WTC11 (cell line): ENCODE measurements at regions of chr20 and their contacts with region 1.

Region 1: DNA sequence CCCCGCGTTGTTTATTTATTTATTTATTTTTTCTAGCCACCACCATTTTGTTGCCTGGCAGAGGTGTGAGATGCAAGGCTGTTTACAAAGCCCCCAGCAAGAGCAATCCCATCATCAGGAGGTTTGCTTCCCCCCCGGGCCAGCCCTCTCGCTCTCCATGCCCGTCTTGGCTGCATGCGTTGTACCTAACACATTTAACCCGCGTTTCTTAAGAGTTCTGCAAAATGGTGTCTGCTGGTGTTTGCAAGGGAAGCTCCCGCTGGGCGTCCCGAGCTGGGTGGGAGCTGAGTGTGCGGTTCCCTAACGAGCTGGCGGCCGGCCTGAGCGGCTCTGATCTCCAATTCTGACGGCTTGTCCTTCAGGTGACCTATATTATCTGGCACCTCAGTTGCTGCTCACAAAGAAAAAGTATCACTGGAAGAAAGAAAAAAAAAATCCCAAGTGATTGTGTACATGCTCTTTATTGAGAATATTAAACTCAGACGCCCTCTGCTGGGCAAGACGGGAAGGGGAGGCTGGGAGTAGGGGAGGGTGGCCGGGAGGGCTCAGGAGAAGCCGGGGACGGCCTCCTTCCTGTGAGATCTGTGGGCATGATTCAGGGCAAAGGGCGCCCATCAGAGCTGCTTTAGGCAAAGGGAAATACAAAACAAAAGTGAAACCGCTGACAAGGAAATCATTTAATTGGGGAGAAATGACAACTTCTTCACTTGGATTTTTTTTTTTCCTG is 154.8 kb downstream of the BCAS1 start:
- DNase-seq: peak; percentile 93
- ATAC-seq: peak; percentile 75
- H3K4me3 Mint-ChIP-seq: peak overlapping the region; percentile 86
- H3K27ac Mint-ChIP-seq: peak overlapping the region; percentile 90
- H3K4me1 Mint-ChIP-seq: peaks cover 46% of the 10 kb centered on the region
- H3K27me3 Mint-ChIP-seq: no peaks in the 10 kb centered on the region; the same call in 1 of the 2 replicates
- CTCF ChIP-seq: peak; percentile 76

Region 2: DNA sequence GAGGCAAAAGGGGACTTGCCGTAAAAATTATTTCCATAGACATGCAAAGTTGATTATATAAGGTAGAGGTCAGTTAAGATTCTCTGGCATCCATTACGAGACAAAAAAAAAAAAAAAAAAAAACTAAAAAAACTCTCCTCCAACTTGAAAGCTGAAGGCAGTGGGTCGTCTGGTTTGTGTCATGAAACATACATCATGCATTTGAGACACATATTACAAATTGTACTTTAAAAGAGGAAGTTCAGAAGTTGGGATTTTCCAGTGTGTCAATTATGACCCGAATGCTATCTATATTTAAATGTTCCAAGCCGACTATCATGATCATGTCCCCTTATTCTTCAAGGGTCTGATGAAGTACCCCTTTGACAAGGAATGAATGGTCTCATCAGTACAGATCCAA is 447.0 kb before region 1 on chr20:
- CTCF ChIA-PET with region 1: no interaction called
- POLR2A ChIA-PET with region 1: no interaction called
- DNase-seq: no peak
- ATAC-seq: no peak
- H3K4me3 Mint-ChIP-seq: no peak overlapping the region
- H3K27ac Mint-ChIP-seq: no peak overlapping the region
- H3K4me1 Mint-ChIP-seq: peaks cover 7% of the 10 kb centered on the region
- H3K27me3 Mint-ChIP-seq: no peaks in the 10 kb centered on the region; the same call in 1 of the 2 replicates
- CTCF ChIP-seq: no peak

Region 3: DNA sequence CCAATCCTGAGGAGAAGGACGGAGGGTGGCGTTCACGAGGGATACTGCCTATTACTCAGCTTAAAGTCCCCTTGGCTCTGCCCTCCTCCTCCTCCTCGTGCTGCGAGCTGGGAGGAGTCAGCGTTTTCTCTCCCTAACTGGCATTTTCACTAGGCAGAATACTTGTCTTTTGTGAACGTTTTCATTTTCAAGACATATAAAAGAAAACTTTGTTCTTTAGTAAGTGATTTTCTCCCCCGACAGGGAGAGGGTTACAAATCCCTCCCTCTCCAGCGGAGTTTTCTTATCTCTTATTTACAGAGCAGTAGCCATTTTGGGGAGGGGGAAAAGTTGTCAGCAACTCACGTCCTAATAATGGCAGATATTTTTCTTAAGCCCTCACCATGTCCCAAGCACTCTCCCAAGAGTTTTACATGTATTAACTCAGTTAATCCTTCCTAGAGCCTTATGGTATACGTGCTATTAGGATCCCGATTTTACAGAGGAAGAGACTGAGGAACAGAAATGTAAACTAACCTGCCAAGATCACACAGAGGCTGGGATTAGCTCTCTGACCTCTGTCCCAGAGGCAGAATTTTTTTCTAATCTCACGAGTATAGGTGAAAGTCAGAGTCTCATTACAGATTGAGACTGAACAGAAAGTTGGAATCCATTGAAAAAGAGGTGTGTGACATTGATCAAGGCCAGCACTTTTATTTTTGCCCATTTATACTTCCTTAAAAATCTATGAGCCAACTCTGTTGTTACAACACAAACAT is 292.0 kb before region 1 on chr20:
- CTCF ChIA-PET with region 1: interaction called, 12 read pairs
- POLR2A ChIA-PET with region 1: interaction called, 4 read pairs
- DNase-seq: peak; percentile 42
- ATAC-seq: peak; percentile 86
- H3K4me3 Mint-ChIP-seq: peak overlapping the region; percentile 60
- H3K27ac Mint-ChIP-seq: peak overlapping the region; percentile 90
- H3K4me1 Mint-ChIP-seq: peaks cover 37% of the 10 kb centered on the region
- H3K27me3 Mint-ChIP-seq: no peaks in the 10 kb centered on the region
- CTCF ChIP-seq: no peak

Region 4: GRCh38 chr20:53872561-53873229 is 42.9 kb before region 1 on chr20:
- CTCF ChIA-PET with region 1: interaction called, 23 read pairs
- POLR2A ChIA-PET with region 1: interaction called, 3 read pairs
- DNase-seq: no peak
- ATAC-seq: no peak
- H3K4me3 Mint-ChIP-seq: peak overlapping the region; percentile 25; the same call in 1 of the 2 replicates
- H3K27ac Mint-ChIP-seq: peak overlapping the region; percentile 93
- H3K4me1 Mint-ChIP-seq: peaks cover 72% of the 10 kb centered on the region
- H3K27me3 Mint-ChIP-seq: no peaks in the 10 kb centered on the region; the same call in 1 of the 2 replicates
- CTCF ChIP-seq: no peak

Region 5: DNA sequence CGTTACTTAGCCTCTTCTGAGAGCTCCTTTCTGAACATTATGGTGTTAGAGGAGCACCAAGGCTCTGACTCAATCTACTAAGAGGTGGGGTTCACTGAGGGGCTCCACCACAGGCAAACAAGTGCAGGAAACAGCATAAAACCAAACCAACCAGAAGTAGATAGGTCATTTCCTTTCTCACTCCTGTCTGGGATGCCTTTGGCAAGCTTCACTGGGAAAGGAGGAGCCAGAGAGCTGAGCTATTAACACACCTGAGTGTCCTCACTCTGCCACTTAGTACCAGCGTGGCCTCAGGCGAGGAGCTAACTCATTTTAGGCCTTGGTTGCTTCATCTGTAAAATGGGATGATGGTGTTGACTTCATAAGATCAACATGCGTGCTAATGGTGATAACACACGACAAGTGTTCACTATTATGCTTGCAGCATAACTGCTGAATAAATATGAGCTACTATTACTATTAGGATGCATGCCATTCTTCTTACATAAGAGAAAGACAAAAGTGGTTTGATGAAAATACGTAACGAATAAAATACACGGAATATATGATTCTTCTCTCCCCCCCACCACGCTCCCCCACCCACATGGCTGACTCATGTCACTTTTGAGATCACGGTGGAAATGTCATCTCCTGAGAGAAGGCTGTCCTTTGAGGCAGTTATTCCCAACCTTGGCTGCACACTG is 30.6 kb before region 1 on chr20:
- CTCF ChIA-PET with region 1: interaction called, 21 read pairs
- POLR2A ChIA-PET with region 1: no interaction called
- DNase-seq: no peak
- ATAC-seq: peak; percentile 33
- H3K4me3 Mint-ChIP-seq: no peak overlapping the region
- H3K27ac Mint-ChIP-seq: peak overlapping the region; percentile 43
- H3K4me1 Mint-ChIP-seq: peaks cover 54% of the 10 kb centered on the region
- H3K27me3 Mint-ChIP-seq: no peaks in the 10 kb centered on the region
- CTCF ChIP-seq: no peak

Region 6: GRCh38 chr20:53899351-53900167 is 16.1 kb before region 1 on chr20:
- CTCF ChIA-PET with region 1: interaction called, 68 read pairs
- POLR2A ChIA-PET with region 1: interaction called, 3 read pairs
- DNase-seq: no peak
- ATAC-seq: peak; percentile 59
- H3K4me3 Mint-ChIP-seq: no peak overlapping the region
- H3K27ac Mint-ChIP-seq: no peak overlapping the region
- H3K4me1 Mint-ChIP-seq: peaks cover 43% of the 10 kb centered on the region
- H3K27me3 Mint-ChIP-seq: no peaks in the 10 kb centered on the region
- CTCF ChIP-seq: no peak

Region 7: DNA sequence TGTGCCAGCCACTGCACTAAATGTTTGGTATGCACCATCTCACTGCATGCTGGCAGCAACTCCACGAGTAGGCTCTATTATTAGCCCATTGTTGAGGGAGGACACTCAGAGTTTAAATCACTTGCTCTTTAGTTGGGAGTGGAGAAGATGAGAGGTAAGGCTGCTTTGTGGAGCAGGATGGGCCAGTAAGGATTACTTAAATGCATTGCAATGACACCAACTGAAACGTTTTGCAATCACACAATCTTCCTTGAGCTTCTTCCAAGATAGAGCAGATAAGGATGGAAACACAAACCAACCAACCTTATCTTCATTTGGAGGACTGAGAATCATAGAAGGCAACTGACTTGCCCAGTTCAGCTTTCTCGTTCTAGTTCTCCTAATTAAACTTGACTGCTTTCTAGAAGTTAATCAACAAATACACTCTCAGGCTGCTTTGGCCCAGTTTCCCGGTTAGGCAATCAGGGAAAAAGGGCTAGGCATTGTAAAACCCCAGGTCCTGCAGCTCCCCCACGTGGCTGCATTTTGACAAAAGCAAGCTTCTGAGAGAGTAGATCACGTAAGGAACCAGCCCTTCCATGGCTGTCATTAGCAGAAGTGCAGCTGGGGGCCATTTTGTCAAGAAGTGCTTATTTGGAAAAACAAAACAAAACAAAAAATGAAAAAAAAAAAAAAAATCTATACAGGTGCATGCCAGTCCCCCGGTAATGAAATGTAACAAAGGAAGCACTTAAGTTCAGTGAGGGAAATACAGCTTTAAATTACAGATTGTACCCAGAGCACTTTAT is 24.2 kb after region 1 on chr20:
- CTCF ChIA-PET with region 1: interaction called, 31 read pairs
- POLR2A ChIA-PET with region 1: interaction called, 5 read pairs
- DNase-seq: peak; percentile 91
- ATAC-seq: peak; percentile 77
- H3K4me3 Mint-ChIP-seq: peak overlapping the region; percentile 59
- H3K27ac Mint-ChIP-seq: peak overlapping the region; percentile 54
- H3K4me1 Mint-ChIP-seq: peaks cover 70% of the 10 kb centered on the region
- H3K27me3 Mint-ChIP-seq: no peaks in the 10 kb centered on the region
- CTCF ChIP-seq: peak; percentile 58